SK-N-SH (cell line): ENCODE measurements at regions of chr1 and their contacts with region 1.

Region 1: DNA sequence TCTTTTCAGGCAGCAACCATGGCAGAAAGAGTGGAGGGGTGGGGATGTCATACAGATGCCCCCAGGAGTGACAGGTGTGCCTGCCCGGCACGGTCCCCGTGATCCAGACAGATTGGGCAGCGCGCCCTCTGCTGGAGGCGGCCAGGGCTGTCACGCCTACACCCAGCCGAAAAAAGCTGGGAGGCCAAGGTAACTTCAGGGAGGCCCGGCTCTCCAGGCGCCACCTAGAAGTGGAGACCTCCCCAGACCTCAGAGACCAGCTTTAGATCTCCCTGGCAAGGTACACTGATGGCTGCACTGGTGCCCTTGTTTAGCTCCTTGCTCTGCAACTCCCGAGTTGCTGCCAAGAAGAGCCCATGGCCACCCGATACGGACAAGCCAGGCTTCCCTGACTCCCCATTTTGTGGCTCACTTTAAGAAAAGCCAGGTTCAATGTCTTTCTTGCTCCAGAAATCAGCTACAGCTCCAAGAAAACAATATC is 6.6 kb downstream of the GOLT1A start:
- DNase-seq: peak; percentile 86
- H3K4me3 ChIP-seq: no peak overlapping the region; a peak in 1 of 4 replicates
- H3K27ac ChIP-seq: no peak overlapping the region
- H3K4me1 ChIP-seq: peaks cover 0 to 3% of the 10 kb centered on the region in 2 experiments; a peak in 1 of 4 replicates
- H3K27me3 ChIP-seq: peaks cover 6% of the 10 kb centered on the region; the same call in 1 of the 2 replicates
- CTCF ChIP-seq: peak; percentile 90
- EP300 ChIP-seq: no peak
- RAD21 ChIP-seq: peak; percentile 50

Region 2: GRCh38 chr1:203742436-203742835 is 464.7 kb before region 1 on chr1:
- CTCF ChIA-PET with region 1: no interaction called
- POLR2A ChIA-PET with region 1: no interaction called
- DNase-seq: no peak
- H3K4me3 ChIP-seq: no peak overlapping the region
- H3K27ac ChIP-seq: no peak overlapping the region
- H3K4me1 ChIP-seq: no peaks in the 10 kb centered on the region
- H3K27me3 ChIP-seq: no peaks in the 10 kb centered on the region
- CTCF ChIP-seq: no peak
- EP300 ChIP-seq: no peak
- RAD21 ChIP-seq: no peak

Region 3: DNA sequence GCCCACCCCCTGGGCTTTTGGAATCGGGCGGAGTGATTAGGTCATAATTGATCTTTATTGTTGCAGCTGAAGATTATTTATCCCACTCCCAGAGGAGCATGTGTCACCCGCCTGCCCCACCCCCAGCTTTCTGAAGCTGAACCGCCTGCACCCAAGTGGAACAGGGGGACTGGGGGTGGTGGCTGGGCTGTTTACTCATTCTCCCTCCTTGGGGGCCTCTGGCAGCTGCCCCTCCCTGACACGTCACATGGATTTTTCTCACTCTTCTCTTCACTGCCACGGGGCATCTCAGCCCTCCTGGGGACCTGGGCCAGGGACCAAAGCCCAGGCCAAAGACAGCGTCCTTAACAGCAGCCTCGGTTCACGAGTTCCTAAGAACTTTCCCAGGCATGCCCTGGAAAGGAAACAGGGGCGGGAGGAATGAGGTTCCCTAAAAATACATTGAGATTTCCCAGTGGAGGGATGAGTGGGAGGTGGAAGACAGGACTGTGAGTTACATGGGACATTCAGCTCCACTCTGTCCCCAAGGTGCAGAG is 165.9 kb before region 1 on chr1:
- CTCF ChIA-PET with region 1: no interaction called
- POLR2A ChIA-PET with region 1: no interaction called
- DNase-seq: no peak
- H3K4me3 ChIP-seq: no peak overlapping the region
- H3K27ac ChIP-seq: no peak overlapping the region
- H3K4me1 ChIP-seq: no peaks in the 10 kb centered on the region
- H3K27me3 ChIP-seq: no peaks in the 10 kb centered on the region; the same call in 1 of the 2 replicates
- CTCF ChIP-seq: no peak
- EP300 ChIP-seq: no peak
- RAD21 ChIP-seq: no peak

Region 4: GRCh38 chr1:204171751-204172178 is 35.4 kb before region 1 on chr1:
- CTCF ChIA-PET with region 1: interaction called, 157 read pairs
- POLR2A ChIA-PET with region 1: no interaction called
- DNase-seq: no peak
- H3K4me3 ChIP-seq: no peak overlapping the region
- H3K27ac ChIP-seq: no peak overlapping the region
- H3K4me1 ChIP-seq: 0 out of 4 replicates have a peak, but pooled peaks cover 0 to 3% of the 10 kb centered on the region in 2 experiments
- H3K27me3 ChIP-seq: no peaks in the 10 kb centered on the region; the same call in 1 of the 2 replicates
- CTCF ChIP-seq: no peak
- EP300 ChIP-seq: no peak
- RAD21 ChIP-seq: no peak

Region 5: DNA sequence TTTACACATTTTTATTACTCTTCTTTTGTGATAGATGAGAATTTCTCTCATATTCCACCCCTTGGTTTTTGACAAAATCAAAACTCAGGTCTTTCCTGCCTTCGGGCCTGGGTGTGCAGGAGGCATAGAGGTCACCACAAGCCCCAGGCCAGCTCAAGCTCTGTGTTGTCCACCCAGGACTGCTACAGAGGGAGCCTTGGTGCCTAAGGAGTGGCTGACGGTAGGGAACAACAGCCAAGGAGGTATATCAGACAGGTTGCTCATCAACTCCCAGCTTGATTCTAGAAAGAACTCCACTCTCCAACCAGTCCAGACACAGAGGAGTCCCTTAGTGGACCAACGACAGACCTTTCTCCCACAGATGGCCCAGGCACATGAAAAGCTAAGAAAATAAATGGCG is 24.3 kb before region 1 on chr1:
- CTCF ChIA-PET with region 1: interaction called, 20 read pairs
- POLR2A ChIA-PET with region 1: no interaction called
- DNase-seq: no peak
- H3K4me3 ChIP-seq: no peak overlapping the region
- H3K27ac ChIP-seq: no peak overlapping the region
- H3K4me1 ChIP-seq: no peaks in the 10 kb centered on the region
- H3K27me3 ChIP-seq: no peaks in the 10 kb centered on the region; the same call in 1 of the 2 replicates
- CTCF ChIP-seq: no peak
- EP300 ChIP-seq: no peak
- RAD21 ChIP-seq: no peak

Region 6: GRCh38 chr1:204190212-204191211 is 16.7 kb before region 1 on chr1:
- CTCF ChIA-PET with region 1: interaction called, 31 read pairs
- POLR2A ChIA-PET with region 1: no interaction called
- DNase-seq: no peak
- H3K4me3 ChIP-seq: no peak overlapping the region
- H3K27ac ChIP-seq: no peak overlapping the region
- H3K4me1 ChIP-seq: peaks cover 0 to 4% of the 10 kb centered on the region in 2 experiments; a peak in 2 of 4 replicates
- H3K27me3 ChIP-seq: no peaks in the 10 kb centered on the region; the same call in 1 of the 2 replicates
- CTCF ChIP-seq: no peak
- EP300 ChIP-seq: no peak
- RAD21 ChIP-seq: no peak

Region 7: GRCh38 chr1:204257954-204258752 is 51.0 kb after region 1 on chr1:
- CTCF ChIA-PET with region 1: interaction called, 11 read pairs
- POLR2A ChIA-PET with region 1: no interaction called
- DNase-seq: peak; percentile 88
- H3K4me3 ChIP-seq: no peak overlapping the region
- H3K27ac ChIP-seq: peak overlapping the region in 1 of 2 experiments; percentile 67; a peak in 2 of 4 replicates
- H3K4me1 ChIP-seq: peaks cover 0 to 28% of the 10 kb centered on the region in 2 experiments; a peak in 2 of 4 replicates
- H3K27me3 ChIP-seq: no peaks in the 10 kb centered on the region; the same call in 1 of the 2 replicates
- CTCF ChIP-seq: peak; percentile 73
- EP300 ChIP-seq: no peak
- RAD21 ChIP-seq: peak; percentile 80

Region 8: DNA sequence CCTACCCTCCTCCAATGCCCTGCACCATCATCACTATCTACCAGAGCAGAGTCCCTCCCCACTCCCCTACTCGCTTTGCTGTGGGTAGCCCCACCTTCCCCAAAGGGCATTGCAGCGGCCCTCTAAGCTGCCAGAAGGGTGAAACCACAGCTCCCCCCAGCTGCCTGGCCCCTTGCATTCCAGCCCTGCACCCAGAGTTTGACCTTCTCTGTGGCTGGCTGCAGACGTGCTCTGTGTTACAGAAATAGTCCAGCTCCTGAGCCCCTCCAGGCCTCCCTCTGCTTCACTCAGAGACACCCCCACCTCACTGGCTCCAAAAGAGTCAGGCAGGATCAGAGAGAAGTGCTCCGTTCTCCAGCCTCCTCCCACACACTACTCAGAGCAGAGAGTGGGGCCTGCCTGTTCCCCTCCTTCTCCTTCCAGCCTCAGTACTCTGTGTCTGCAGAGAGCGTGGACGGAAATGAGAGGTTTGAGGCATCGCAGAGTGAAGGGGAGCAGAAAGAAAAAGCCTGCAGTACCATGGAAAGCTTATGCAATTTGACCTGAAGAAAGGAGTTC is 89.3 kb after region 1 on chr1:
- CTCF ChIA-PET with region 1: no interaction called
- POLR2A ChIA-PET with region 1: no interaction called
- DNase-seq: no peak
- H3K4me3 ChIP-seq: no peak overlapping the region
- H3K27ac ChIP-seq: peak overlapping the region in 1 of 2 experiments; percentile 100; a peak in 2 of 4 replicates
- H3K4me1 ChIP-seq: peaks cover 0 to 91% of the 10 kb centered on the region in 2 experiments; a peak in 2 of 4 replicates
- H3K27me3 ChIP-seq: peaks cover 27% of the 10 kb centered on the region
- CTCF ChIP-seq: no peak
- EP300 ChIP-seq: 0 out of 4 replicates have a peak, but pooled peaks of 1 of the 2 experiments have one; percentile 13
- RAD21 ChIP-seq: peak; percentile 50

Region 9: GRCh38 chr1:204307334-204307883 is 100.2 kb after region 1 on chr1:
- CTCF ChIA-PET with region 1: no interaction called
- POLR2A ChIA-PET with region 1: no interaction called
- DNase-seq: no peak
- H3K4me3 ChIP-seq: no peak overlapping the region
- H3K27ac ChIP-seq: peak overlapping the region in 1 of 2 experiments; percentile 4; a peak in 1 of 4 replicates
- H3K4me1 ChIP-seq: peaks cover 0 to 17% of the 10 kb centered on the region in 2 experiments; a peak in 1 of 4 replicates
- H3K27me3 ChIP-seq: peaks cover 21% of the 10 kb centered on the region; the same call in 1 of the 2 replicates
- CTCF ChIP-seq: no peak
- EP300 ChIP-seq: no peak
- RAD21 ChIP-seq: no peak